SK-N-SH (cell line): ENCODE measurements at regions of chr12 and their contacts with region 1.

Region 1: GRCh38 chr12:98572010-98572409 is 21.5 kb upstream of the SLC25A3 start:
- DNase-seq: no peak
- H3K4me3 ChIP-seq: peak overlapping the region in 1 of 2 experiments; percentile 35; a peak in 1 of 4 replicates
- H3K27ac ChIP-seq: no peak overlapping the region
- H3K4me1 ChIP-seq: no peaks in the 10 kb centered on the region
- H3K27me3 ChIP-seq: no peaks in the 10 kb centered on the region
- CTCF ChIP-seq: no peak; the same call in 1 of the 2 replicates
- EP300 ChIP-seq: no peak
- RAD21 ChIP-seq: no peak

Region 2: GRCh38 chr12:98550803-98551202 is 21.2 kb before region 1 on chr12:
- CTCF ChIA-PET with region 1: interaction called, 27 read pairs
- POLR2A ChIA-PET with region 1: no interaction called
- DNase-seq: no peak
- H3K4me3 ChIP-seq: no peak overlapping the region
- H3K27ac ChIP-seq: no peak overlapping the region
- H3K4me1 ChIP-seq: no peaks in the 10 kb centered on the region; a peak in 1 of 4 replicates
- H3K27me3 ChIP-seq: no peaks in the 10 kb centered on the region
- CTCF ChIP-seq: no peak
- EP300 ChIP-seq: no peak
- RAD21 ChIP-seq: no peak

Region 3: GRCh38 chr12:98587084-98587483 is 15.1 kb after region 1 on chr12:
- CTCF ChIA-PET with region 1: interaction called, 13 read pairs
- POLR2A ChIA-PET with region 1: no interaction called
- DNase-seq: no peak
- H3K4me3 ChIP-seq: no peak overlapping the region
- H3K27ac ChIP-seq: no peak overlapping the region
- H3K4me1 ChIP-seq: 0 out of 4 replicates have a peak, but pooled peaks cover 0 to 1% of the 10 kb centered on the region in 2 experiments
- H3K27me3 ChIP-seq: no peaks in the 10 kb centered on the region
- CTCF ChIP-seq: no peak
- EP300 ChIP-seq: no peak
- RAD21 ChIP-seq: no peak

Region 4: GRCh38 chr12:98644711-98645402 is 72.8 kb after region 1 on chr12 and contains the starts of genes APAF1 and IKBIP:
- CTCF ChIA-PET with region 1: interaction called, 20 read pairs
- POLR2A ChIA-PET with region 1: no interaction called
- DNase-seq: peak; percentile 96
- H3K4me3 ChIP-seq: peak within 1 kb of the TSS; percentile 79
- H3K27ac ChIP-seq: peak within 1 kb of the TSS; percentile 86 to 97
- H3K4me1 ChIP-seq: peaks cover 2 to 12% of the 10 kb centered on the region in 2 experiments; a peak in 3 of 4 replicates
- H3K27me3 ChIP-seq: no peaks in the 10 kb centered on the region
- CTCF ChIP-seq: peak; percentile 1; the same call in 1 of the 2 replicates
- EP300 ChIP-seq: no peak
- RAD21 ChIP-seq: no peak
- polyA plus RNA-seq, gene APAF1: 3.3 and 4.1 TPM in 2 replicates
- polyA plus RNA-seq, gene IKBIP: 25.2 and 26.4 TPM in 2 replicates

Region 5: DNA sequence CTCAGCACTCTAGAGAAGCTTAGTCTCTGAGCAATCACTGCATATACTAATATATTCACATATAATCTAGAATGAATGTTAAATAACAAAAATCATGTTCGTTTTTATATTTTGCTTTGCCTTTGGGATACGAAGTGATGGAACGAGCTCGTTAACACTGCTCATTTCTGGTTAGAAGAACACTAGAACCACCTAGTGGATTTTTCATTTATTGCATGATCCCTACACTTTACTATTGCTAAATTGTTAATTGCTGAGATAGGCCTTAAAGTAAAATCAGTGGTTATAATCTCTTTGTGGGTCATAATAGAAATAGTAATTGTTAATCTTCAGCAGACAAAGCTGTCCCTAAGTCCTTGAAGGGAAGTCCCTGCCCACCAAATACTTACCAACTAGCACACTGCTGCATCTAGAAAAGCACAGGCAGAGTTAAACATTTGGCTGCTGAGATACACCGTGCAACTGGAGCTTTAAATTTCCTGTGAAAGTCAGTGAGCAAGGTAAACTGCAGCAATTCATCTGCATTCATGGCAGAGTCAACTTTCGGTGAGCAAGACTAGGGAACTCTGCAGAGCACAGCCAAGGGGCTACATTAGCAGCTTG is 426.8 kb after region 1 on chr12:
- CTCF ChIA-PET with region 1: interaction called, 11 read pairs
- POLR2A ChIA-PET with region 1: no interaction called
- DNase-seq: peak; percentile 55
- H3K4me3 ChIP-seq: no peak overlapping the region; a peak in 1 of 4 replicates
- H3K27ac ChIP-seq: no peak overlapping the region
- H3K4me1 ChIP-seq: no peaks in the 10 kb centered on the region; a peak in 1 of 4 replicates
- H3K27me3 ChIP-seq: no peaks in the 10 kb centered on the region
- CTCF ChIP-seq: peak; percentile 77
- EP300 ChIP-seq: no peak
- RAD21 ChIP-seq: peak; percentile 91